Activated CD8-positive, alpha-beta T cell treated with anti-CD3 and anti-CD28 coated beads, Interleukin-2, amount 10 ng/mL, durations not matched to agents 7 days and 5 days (primary cell): ENCODE measurements at regions of chr11 and their contacts with region 1.

Region 1: DNA sequence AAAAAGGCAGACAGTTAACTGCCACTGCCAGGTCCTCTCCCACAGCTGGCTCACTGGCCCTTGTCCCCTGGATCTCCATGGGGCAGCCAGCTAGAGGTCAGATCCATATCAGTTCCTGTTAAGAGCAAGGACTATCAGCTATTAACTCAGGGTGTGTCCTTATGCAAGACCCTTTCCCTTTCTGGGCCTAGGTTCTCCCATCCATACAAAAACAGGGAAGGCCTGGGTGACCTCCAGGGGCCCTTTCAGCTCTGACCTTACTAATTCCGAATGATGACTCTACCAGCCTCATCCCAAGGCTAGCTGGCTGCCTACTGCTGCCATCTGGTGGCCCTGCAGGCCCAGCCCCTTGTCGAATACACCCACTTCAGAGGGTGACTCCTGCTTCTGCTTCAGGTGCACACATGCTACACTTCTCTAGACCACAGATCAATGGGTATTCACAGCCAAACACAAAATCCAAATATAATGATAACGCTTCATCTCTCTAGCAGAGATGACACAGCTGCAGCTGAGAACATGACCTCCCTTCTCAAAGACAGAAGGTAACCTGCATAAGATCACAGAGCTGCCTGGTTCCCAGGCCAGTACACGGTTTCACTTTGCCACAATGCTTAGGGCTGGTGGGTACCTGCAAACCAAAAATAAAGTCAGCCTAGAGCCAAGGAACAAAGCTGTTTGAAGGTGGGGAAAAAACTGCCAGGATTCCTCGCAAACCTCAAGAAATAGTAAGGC is 34.1 kb downstream of the SERGEF start:
- DNase-seq: peak; percentile 34
- ATAC-seq: peak; percentile 42
- H3K4me3 Mint-ChIP-seq: no peak overlapping the region
- H3K27ac Mint-ChIP-seq: no peak overlapping the region
- H3K4me1 Mint-ChIP-seq: no peaks in the 10 kb centered on the region
- H3K27me3 Mint-ChIP-seq: no peaks in the 10 kb centered on the region

Region 2: DNA sequence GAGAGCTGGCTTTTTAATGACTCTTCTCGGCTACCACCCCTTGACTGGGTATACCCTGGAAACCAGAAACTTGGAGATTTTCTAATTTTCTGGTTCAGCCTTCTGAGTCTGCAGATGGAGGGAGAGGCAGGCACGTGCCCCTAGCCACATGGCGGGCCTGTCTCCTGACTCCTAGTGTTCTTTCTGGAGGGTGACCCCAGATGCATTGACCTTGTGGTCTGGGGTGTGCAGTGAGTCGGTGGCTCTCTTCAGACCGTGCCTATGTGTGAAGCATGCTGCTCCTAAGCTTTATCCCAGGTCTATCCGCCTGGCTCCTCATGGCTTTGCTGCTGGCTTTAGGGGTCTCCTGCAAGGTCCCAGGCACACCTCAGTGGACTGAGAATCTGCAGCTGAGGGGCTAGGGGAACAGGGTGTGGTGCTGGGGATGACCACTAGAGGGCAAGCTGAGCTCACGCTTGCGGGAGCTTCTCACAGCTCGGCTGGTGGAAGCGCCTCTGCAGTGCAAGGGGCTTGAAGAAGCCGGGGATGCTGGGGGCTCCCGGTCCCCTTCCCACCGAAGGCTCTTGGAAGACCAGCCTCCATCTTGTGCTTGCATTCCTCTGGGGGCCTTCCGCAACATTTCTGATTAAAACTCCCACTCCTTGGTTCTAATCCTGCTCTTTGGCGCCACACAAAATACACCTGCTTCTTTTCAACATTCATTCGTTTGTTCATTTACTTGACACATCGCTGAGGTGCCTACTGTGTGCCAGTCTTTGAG is 379.8 kb before region 1 on chr11:
- CTCF ChIA-PET with region 1: interaction called, 23 read pairs
- POLR2A ChIA-PET with region 1: no interaction called
- DNase-seq: peak; percentile 82
- ATAC-seq: peak; percentile 91
- H3K4me3 Mint-ChIP-seq: no peak overlapping the region
- H3K27ac Mint-ChIP-seq: no peak overlapping the region
- H3K4me1 Mint-ChIP-seq: no peaks in the 10 kb centered on the region
- H3K27me3 Mint-ChIP-seq: peaks cover 5% of the 10 kb centered on the region

Region 3: GRCh38 chr11:17760102-17761029 is 218.4 kb before region 1 on chr11:
- CTCF ChIA-PET with region 1: interaction called, 21 read pairs
- POLR2A ChIA-PET with region 1: no interaction called
- DNase-seq: peak; percentile 47
- ATAC-seq: peak; percentile 81
- H3K4me3 Mint-ChIP-seq: no peak overlapping the region
- H3K27ac Mint-ChIP-seq: no peak overlapping the region
- H3K4me1 Mint-ChIP-seq: no peaks in the 10 kb centered on the region
- H3K27me3 Mint-ChIP-seq: peaks cover 9% of the 10 kb centered on the region

Region 4: GRCh38 chr11:17991783-17992433 is 13.2 kb after region 1 on chr11:
- CTCF ChIA-PET with region 1: interaction called, 41 read pairs
- POLR2A ChIA-PET with region 1: interaction called, 3 read pairs
- DNase-seq: peak; percentile 64
- ATAC-seq: peak; percentile 72
- H3K4me3 Mint-ChIP-seq: no peak overlapping the region
- H3K27ac Mint-ChIP-seq: no peak overlapping the region
- H3K4me1 Mint-ChIP-seq: no peaks in the 10 kb centered on the region
- H3K27me3 Mint-ChIP-seq: no peaks in the 10 kb centered on the region